MCF 10A (cell line): ENCODE measurements at regions of chr2 and their contacts with region 1.

Region 1: DNA sequence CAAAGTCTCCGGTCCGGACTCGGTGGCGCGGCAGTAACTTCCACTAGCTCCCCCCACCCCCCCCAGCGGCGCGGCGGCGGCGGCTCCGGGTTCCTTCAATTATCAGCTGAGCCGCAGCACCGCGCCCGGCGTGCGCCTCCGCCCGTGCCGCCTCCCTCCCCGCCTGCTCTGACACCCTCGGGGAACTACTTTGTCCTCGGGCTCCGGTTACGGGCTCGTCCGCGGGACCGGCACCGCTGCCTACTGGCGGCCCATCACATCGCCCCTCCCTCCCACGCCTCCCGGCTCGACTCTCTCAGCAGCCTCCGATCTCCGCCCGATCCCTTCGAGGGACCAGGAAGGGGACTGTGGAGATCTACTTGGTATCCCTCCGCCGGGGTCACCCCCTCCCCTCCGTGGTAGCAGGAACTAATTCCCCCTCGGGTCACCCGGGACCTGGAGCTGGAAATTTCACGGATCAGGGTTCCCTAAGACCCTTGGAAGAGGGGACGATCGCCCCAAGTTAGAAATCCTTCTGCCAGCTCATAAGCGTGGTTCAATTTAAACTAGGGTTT is at the start of gene TRIP12:
- DNase-seq: peak; percentile 95
- H3K4me3 Mint-ChIP-seq: peak within 1 kb of the TSS; percentile 94
- H3K27ac Mint-ChIP-seq: peak within 1 kb of the TSS; percentile 97
- H3K4me1 Mint-ChIP-seq: peaks cover 19% of the 10 kb centered on the region
- H3K27me3 Mint-ChIP-seq: no peaks in the 10 kb centered on the region
- CTCF ChIP-seq: no peak
- total RNA-seq, gene TRIP12: 221 and 265 TPM in 2 replicates

Region 2: DNA sequence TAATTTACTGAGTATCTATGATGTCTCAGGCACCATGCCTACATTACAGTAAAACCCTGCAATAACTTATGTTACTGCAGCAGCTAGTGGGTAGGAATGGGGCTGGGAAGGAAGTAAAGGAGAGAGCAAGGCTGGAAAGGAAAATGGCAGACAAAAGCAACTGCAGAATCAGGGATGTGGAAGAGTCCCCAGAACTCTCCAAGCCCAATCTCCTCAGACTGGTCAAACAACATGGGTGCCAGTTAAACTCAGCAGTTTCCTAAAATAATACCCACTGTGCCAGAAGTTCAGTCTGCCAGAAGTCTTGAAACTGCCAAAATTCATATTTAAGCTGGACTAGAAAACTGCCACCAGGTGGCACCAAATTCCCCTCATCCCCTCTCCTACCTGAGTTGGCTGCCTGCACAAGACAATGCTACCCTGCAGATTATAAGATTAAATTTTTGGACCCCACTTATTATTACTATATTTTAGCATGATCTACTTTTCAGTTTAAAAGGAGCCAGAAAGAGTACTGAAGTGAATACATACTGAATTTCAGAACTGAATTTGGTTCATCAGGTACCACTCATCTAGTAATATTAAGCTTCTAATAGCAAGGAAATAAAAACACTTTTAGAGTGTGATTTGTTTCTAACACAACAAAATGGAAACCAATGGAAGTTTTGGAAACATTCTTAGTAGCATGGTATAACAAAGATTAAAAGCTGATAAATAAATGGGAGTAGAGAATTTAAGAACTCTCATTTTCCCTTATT is 120.8 kb before region 1 on chr2:
- CTCF ChIA-PET with region 1: interaction called, 4 read pairs
- POLR2A ChIA-PET with region 1: interaction called, 4 read pairs
- intact Hi-C with region 1: loop called (anchors 2 kb)
- DNase-seq: peak; percentile 79
- H3K4me3 Mint-ChIP-seq: no peak overlapping the region
- H3K27ac Mint-ChIP-seq: no peak overlapping the region
- H3K4me1 Mint-ChIP-seq: peaks cover 9% of the 10 kb centered on the region
- H3K27me3 Mint-ChIP-seq: no peaks in the 10 kb centered on the region
- CTCF ChIP-seq: peak; percentile 65

Region 3: GRCh38 chr2:229882583-229882982 is 39.4 kb before region 1 on chr2:
- CTCF ChIA-PET with region 1: no interaction called
- POLR2A ChIA-PET with region 1: interaction called, 10 read pairs
- intact Hi-C with region 1: no loop called
- DNase-seq: no peak
- H3K4me3 Mint-ChIP-seq: no peak overlapping the region
- H3K27ac Mint-ChIP-seq: no peak overlapping the region
- H3K4me1 Mint-ChIP-seq: peaks cover 6% of the 10 kb centered on the region
- H3K27me3 Mint-ChIP-seq: no peaks in the 10 kb centered on the region
- CTCF ChIP-seq: no peak

Region 4: DNA sequence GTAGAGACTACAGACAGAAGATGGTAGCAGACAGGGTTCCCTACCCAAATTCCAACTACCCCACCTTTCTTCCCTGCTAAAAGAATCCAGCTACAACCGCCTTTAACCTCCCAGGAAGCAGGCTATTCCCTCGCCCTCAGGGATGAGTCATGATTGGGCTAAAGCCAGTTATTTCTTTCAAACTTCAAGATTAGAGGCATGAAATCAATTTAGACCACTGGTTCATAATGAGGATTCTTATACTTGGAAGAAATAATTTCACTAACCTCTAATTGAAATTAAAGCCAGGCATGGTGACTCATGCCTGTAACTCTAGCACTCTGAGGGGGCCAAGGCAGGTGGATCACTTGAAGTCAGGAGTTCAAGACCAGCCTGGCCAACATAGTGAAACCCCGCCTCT is 20.1 kb before region 1 on chr2:
- CTCF ChIA-PET with region 1: interaction called, 3 read pairs
- POLR2A ChIA-PET with region 1: interaction called, 15 read pairs
- intact Hi-C with region 1: no loop called
- DNase-seq: peak; percentile 90
- H3K4me3 Mint-ChIP-seq: no peak overlapping the region
- H3K27ac Mint-ChIP-seq: peak overlapping the region; percentile 68
- H3K4me1 Mint-ChIP-seq: peaks cover 22% of the 10 kb centered on the region
- H3K27me3 Mint-ChIP-seq: no peaks in the 10 kb centered on the region
- CTCF ChIP-seq: no peak

Region 5: DNA sequence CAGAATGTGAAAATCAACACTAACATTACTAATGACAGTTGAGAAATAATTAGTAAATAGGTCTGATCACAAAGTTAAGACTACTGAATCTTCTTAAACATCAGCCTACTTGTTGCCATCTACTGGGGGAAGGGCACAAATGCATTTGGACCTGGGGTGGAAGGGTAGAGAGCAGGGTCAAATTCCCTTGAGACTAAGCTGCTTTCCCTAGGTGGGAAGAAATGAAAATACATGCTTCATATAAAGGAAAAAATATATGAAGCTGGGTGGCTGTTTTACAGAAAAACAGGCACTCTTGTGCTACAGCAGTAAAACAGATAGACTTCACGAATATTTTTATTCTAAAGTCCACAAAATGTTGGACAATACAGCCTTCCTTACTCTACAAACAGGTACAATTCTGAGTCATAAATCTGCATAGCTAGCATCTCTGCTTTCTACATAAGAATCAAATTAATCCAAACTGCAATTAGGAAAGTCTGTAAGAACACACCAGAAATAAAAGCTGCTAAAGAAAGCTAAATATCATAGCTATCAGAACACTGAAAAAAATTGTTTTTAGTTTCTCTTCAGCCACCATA is 11.0 kb before region 1 on chr2:
- CTCF ChIA-PET with region 1: interaction called, 7 read pairs
- POLR2A ChIA-PET with region 1: interaction called, 54 read pairs
- intact Hi-C with region 1: no loop called
- DNase-seq: peak; percentile 46
- H3K4me3 Mint-ChIP-seq: no peak overlapping the region
- H3K27ac Mint-ChIP-seq: no peak overlapping the region
- H3K4me1 Mint-ChIP-seq: peaks cover 27% of the 10 kb centered on the region
- H3K27me3 Mint-ChIP-seq: no peaks in the 10 kb centered on the region
- CTCF ChIP-seq: peak; percentile 21